ENCODE measurements at regions of chr10 and their contacts with region 1.

Region 1: GRCh38 chr10:14837757-14838581 is at the starts of genes CDNF, HSPA14 and MSANTD7:
- DNase-seq: peak; percentile 99
- ATAC-seq: peak; percentile 95
- H3K4me3 Mint-ChIP-seq: peak within 1 kb of the TSS; percentile 95
- H3K27ac Mint-ChIP-seq: peak within 1 kb of the TSS; percentile 94
- H3K4me1 Mint-ChIP-seq: peaks cover 22% of the 10 kb centered on the region
- H3K27me3 Mint-ChIP-seq: no peaks in the 10 kb centered on the region
- total RNA-seq, gene CDNF: 0.50 to 0.94 TPM
- total RNA-seq, gene HSPA14: 26.4 to 35.0 TPM
- total RNA-seq, gene MSANTD7: 20.1 to 21.0 TPM

Region 2: DNA sequence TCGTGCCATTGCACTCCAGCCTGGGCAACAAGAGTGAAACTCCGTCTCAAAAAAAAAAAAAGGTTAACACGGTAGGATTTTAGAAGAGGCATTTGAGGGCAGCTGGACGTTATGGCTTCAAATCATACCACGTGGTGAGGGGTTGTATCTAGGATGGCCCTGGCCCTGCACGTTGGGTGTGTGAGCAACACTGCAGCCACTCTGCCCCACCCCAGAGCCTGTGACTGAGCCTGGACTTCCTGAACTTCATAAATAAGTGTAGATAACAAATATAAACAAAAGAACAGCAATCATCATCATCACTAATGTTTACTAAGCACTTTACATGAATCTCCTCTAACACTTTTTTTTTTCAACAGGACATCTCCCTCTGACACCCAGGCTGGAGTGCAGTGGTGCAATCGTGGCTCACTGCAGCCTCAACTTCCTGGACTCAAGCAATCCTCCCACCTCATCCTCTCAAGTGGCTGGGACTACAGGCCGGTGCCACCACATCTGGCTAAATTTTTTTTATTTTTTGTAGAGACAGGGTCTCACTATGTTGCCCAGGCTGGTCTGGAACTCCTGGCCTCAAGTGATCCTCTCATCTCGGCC is 337.7 kb before region 1 on chr10:
- CTCF ChIA-PET with region 1: interaction called, 14 read pairs
- DNase-seq: no peak
- ATAC-seq: no peak
- H3K4me3 Mint-ChIP-seq: no peak overlapping the region
- H3K27ac Mint-ChIP-seq: no peak overlapping the region
- H3K4me1 Mint-ChIP-seq: peaks cover 13% of the 10 kb centered on the region
- H3K27me3 Mint-ChIP-seq: peaks cover 12% of the 10 kb centered on the region

Region 3: DNA sequence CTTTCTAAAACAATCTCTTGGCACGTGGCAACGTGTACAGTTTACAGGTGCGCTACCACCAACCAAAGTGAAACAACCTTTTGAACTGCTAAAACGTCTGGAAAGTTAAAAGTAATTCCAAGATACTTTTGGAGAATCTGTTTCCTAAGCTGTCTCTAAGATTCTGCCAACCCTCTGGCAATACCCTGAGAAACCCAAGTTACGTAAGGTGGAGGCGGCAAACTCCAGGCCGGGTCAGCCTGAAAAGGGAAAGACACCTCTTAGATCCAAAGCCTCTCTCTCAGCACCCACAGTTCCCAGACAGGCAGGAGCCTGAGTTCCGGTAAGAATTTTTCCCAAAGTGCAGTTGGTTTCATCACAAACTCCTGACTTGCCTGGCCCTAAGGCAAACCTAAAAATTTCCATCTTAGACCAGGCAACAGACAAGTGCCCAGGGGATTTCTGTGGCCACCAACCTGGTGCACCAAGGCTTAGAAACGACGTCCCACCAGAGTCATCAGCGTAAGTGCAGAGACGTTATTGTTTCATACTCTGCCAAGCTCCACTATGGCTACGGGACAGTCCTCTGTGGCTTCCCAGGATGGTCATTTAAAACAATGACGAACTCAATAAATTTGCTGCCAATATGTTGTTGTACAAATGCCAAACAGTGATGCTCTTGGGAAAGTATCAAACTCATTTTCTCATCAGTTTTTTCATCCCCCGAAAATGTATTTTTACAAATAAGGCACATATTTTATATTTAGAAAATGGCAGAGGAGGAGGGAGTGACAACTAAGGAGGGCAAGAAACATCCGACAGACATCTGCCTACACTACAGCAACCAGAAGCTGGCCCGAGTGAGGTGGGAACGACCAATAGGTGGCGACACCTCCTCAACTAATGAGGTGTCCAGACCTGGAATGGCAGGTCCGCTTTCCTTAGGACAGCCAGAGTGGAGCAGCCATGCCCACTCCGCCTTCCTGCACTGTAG is 301.4 kb before region 1 on chr10:
- CTCF ChIA-PET with region 1: interaction called, 16 read pairs
- DNase-seq: peak; percentile 59
- ATAC-seq: peak; percentile 47
- H3K4me3 Mint-ChIP-seq: no peak overlapping the region
- H3K27ac Mint-ChIP-seq: no peak overlapping the region
- H3K4me1 Mint-ChIP-seq: peaks cover 36% of the 10 kb centered on the region
- H3K27me3 Mint-ChIP-seq: no peaks in the 10 kb centered on the region

Region 4: DNA sequence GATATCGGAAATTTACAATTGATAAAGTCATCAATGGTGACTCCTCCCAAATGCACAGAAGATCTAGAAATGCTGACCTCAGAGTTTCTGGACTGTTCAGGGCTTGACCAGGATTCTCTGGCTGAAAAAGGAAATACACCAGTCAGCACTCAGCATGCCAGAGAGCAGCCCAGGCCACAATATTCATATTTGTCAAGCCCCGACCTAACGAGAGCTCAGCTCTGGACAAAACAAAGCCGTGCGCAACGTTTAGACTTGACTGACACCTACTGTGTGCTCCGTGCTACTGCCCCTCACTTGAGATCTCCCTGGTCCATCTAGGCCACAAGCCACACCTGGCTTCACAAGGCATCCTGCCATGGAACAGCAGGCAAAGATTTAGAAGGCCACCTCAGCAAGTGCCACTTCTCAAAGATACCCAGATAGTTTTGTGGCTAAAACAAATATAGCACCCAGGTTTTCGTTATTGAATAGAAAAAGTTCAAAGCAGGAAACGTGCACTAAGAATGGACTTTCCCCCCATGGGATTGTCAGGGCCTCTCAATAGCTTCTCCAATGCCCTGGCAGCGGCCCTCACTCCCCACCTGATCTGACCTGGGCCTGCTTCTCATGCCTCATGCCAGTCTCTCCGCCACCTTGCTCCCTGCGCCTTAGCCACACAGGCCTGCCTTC is 281.5 kb before region 1 on chr10:
- CTCF ChIA-PET with region 1: interaction called, 14 read pairs
- DNase-seq: peak; percentile 64
- ATAC-seq: peak; percentile 62
- H3K4me3 Mint-ChIP-seq: no peak overlapping the region
- H3K27ac Mint-ChIP-seq: peak overlapping the region; percentile 74
- H3K4me1 Mint-ChIP-seq: peaks cover 95% of the 10 kb centered on the region
- H3K27me3 Mint-ChIP-seq: no peaks in the 10 kb centered on the region

Region 5: GRCh38 chr10:14822879-14823755 is 14.9 kb before region 1 on chr10:
- CTCF ChIA-PET with region 1: interaction called, 18 read pairs
- DNase-seq: no peak
- ATAC-seq: peak; percentile 49
- H3K4me3 Mint-ChIP-seq: no peak overlapping the region
- H3K27ac Mint-ChIP-seq: no peak overlapping the region
- H3K4me1 Mint-ChIP-seq: peaks cover 4% of the 10 kb centered on the region
- H3K27me3 Mint-ChIP-seq: peaks cover 13% of the 10 kb centered on the region

Region 6: DNA sequence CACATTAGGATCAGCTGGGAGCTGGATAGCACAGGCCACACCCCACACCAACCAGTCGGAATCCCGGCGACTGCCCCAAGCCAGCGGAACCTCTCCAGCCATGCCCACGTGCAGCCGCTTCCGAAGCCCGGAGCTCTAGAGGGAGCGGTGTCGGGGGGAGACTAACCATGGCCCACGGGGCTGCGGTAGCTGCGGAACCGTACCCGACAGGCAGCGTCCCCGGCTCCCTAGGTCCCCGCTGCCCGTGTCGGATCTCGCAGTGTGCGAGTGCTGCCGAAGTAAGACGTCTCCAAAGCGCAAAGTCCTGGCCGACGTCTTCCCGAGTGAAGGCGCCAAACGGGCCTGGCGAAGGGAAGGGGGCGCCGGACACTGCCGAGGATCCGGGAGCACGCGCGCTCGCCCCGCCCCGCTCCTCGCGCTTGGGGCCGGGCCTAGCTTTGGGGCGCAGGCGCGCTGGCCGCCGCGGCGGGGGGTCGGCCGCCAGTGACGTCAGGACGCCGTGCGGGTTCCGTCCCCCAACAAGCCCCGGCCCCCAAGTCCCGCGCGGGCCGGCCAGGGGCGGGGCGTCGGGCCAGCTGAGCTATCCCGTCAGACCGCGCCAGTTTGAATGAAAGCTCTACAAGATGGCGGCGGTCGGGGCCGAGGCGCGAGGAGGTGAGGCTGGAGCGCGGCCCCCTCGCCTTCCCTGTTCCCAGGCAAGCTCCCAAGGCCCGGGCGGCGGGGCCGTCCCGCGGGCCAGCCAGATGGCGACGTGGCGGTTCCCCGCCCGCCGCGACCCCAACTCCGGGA is 40.5 kb after region 1 on chr10 and contains the start of gene SUV39H2:
- CTCF ChIA-PET with region 1: interaction called, 13 read pairs
- DNase-seq: peak; percentile 96
- ATAC-seq: peak; percentile 93
- H3K4me3 Mint-ChIP-seq: peak within 1 kb of the TSS; percentile 95
- H3K27ac Mint-ChIP-seq: peak within 1 kb of the TSS; percentile 91
- H3K4me1 Mint-ChIP-seq: peaks cover 46% of the 10 kb centered on the region
- H3K27me3 Mint-ChIP-seq: no peaks in the 10 kb centered on the region
- total RNA-seq, gene SUV39H2: 33.4 to 40.3 TPM

Measured in activated CD8-positive, alpha-beta memory T cell treated with anti-CD3 and anti-CD28 coated beads, Interleukin-2, amount 10 ng/mL, durations not matched to agents 7 days and 5 days (primary cell).